ENCODE measurements at regions of chr1 and their contacts with region 1.

Region 1: DNA sequence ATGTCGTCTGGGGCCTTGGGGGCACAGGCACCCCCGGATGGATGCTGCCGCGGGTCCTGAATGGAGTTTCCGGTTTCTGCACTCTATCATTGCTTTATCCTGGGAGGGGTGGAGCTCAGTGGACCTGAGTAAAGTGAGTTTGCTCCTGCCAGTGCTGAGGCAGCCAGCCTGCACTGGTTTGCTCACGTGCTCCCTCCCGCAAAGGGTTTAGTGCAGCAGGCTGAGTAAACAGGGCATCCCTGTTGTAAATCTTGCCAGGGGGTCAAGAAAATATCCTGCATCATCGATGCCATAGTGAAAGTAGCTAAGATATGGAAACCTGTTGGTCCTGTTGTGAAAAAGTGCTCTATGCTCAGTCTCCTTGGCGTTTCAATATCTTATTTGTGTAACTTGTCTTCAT is 85.6 kb upstream of the BRINP3 start:
- DNase-seq: no peak
- H3K4me3 ChIP-seq: no peak overlapping the region
- H3K27ac ChIP-seq: no peak overlapping the region
- H3K4me1 ChIP-seq: no peaks in the 10 kb centered on the region
- H3K27me3 ChIP-seq: no peaks in the 10 kb centered on the region
- CTCF ChIP-seq: no peak
- POLR2A ChIP-seq: no peak

Region 2: GRCh38 chr1:190338829-190339228 is 224.4 kb before region 1 on chr1:
- intact Hi-C with region 1: no loop called
- DNase-seq: no peak
- H3K4me3 ChIP-seq: no peak overlapping the region
- H3K27ac ChIP-seq: no peak overlapping the region
- H3K4me1 ChIP-seq: no peaks in the 10 kb centered on the region
- H3K27me3 ChIP-seq: no peaks in the 10 kb centered on the region
- CTCF ChIP-seq: no peak
- POLR2A ChIP-seq: no peak

Region 3: GRCh38 chr1:190511554-190511953 is 51.7 kb before region 1 on chr1:
- intact Hi-C with region 1: no loop called
- DNase-seq: no peak
- H3K4me3 ChIP-seq: no peak overlapping the region
- H3K27ac ChIP-seq: no peak overlapping the region
- H3K4me1 ChIP-seq: no peaks in the 10 kb centered on the region
- H3K27me3 ChIP-seq: no peaks in the 10 kb centered on the region
- CTCF ChIP-seq: no peak
- POLR2A ChIP-seq: no peak

Region 4: GRCh38 chr1:190619724-190620123 is 56.5 kb after region 1 on chr1:
- intact Hi-C with region 1: loop called in 1 of 2 experiments (anchors 10 kb)
- DNase-seq: no peak
- H3K4me3 ChIP-seq: no peak overlapping the region
- H3K27ac ChIP-seq: no peak overlapping the region
- H3K4me1 ChIP-seq: no peaks in the 10 kb centered on the region
- H3K27me3 ChIP-seq: no peaks in the 10 kb centered on the region
- CTCF ChIP-seq: no peak
- POLR2A ChIP-seq: no peak